Right cardiac atrium (tissue), 5 donors: ENCODE measurements at regions of chr2 and their contacts with region 1.

Region 1: GRCh38 chr2:231297108-231297908 is 98.2 kb upstream of the B3GNT7 start:
- DNase-seq: peak; percentile 56 to 85 (median 82)
- ATAC-seq: peak; percentile 74 to 81
- H3K4me3 ChIP-seq: no peak overlapping the region
- H3K27ac ChIP-seq: no peak overlapping the region
- H3K4me1 ChIP-seq: peaks cover 4% of the 10 kb centered on the region
- H3K27me3 ChIP-seq: no peaks in the 10 kb centered on the region

Region 2: GRCh38 chr2:231198291-231199173 is 98.8 kb before region 1 on chr2 and contains the start of gene ARMC9:
- intact Hi-C with region 1: no loop called
- DNase-seq: peak; percentile 76 to 90 (median 89)
- ATAC-seq: peak; percentile 97 to 98
- H3K4me3 ChIP-seq: peak within 1 kb of the TSS; percentile 82
- H3K27ac ChIP-seq: no peak within 1 kb of the TSS
- H3K4me1 ChIP-seq: peaks cover 2% of the 10 kb centered on the region
- H3K27me3 ChIP-seq: no peaks in the 10 kb centered on the region
- total RNA-seq, gene ARMC9: 3.5 to 6.8 (median 3.8) TPM

Region 3: DNA sequence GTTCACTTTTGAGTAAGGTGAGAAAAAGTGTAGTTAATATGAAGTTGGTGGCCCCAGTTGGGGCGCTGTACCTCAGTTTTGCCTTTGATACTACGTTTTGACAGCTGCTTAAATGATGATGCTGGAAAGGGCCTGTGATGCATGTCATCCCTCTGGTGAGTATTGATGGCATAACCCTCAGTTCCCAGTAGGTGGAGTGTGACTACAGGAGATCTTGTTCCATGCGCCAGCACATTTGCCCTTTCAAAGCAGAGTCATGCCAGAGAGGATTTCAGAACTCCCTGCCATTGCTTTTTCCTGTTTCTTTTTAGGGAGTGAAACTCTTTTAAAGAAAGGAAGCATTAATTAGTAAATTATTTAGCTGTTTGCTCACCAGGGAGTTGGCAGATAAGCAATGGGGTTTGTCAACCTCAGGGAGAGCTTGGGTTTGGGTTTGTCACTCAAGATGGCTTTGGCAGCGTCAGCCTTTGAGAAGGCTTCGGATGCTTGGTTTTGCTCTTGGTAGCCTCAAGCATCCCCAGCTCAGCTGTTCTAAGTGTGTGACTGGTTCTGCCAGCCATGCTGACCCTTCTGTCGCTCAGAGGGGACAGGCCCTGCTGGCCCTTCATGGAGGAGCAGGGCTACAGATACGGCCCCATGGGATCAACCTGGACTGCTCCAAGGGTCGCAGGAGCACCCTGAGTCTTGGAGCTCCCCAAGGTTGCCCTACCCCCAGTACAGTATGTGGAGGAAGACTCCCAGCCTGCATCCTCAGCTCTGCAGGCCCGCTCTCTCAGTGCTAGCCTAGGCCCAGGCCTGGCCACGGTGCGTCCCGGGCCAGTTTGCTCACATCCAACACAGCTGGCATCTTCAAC is 69.8 kb before region 1 on chr2:
- intact Hi-C with region 1: loop called in 1 of 4 experiments (anchors 10 kb)
- DNase-seq: peak in 2 of 3 donors; percentile 47 to 70
- ATAC-seq: peak; percentile 95 to 96
- H3K4me3 ChIP-seq: no peak overlapping the region
- H3K27ac ChIP-seq: no peak overlapping the region
- H3K4me1 ChIP-seq: no peaks in the 10 kb centered on the region
- H3K27me3 ChIP-seq: no peaks in the 10 kb centered on the region

Region 4: GRCh38 chr2:231245253-231246094 is 51.8 kb before region 1 on chr2:
- intact Hi-C with region 1: no loop called
- DNase-seq: peak in 1 of 3 donors; percentile 30
- ATAC-seq: no peak
- H3K4me3 ChIP-seq: no peak overlapping the region
- H3K27ac ChIP-seq: no peak overlapping the region
- H3K4me1 ChIP-seq: no peaks in the 10 kb centered on the region
- H3K27me3 ChIP-seq: no peaks in the 10 kb centered on the region

Region 5: GRCh38 chr2:231394211-231395141 is 97.2 kb after region 1 on chr2:
- intact Hi-C with region 1: loop called in 3 of 4 experiments (anchors 2 to 10 kb)
- DNase-seq: peak in 1 of 3 donors; percentile 6
- ATAC-seq: no peak
- H3K4me3 ChIP-seq: no peak overlapping the region
- H3K27ac ChIP-seq: no peak overlapping the region
- H3K4me1 ChIP-seq: no peaks in the 10 kb centered on the region
- H3K27me3 ChIP-seq: no peaks in the 10 kb centered on the region

Region 6: DNA sequence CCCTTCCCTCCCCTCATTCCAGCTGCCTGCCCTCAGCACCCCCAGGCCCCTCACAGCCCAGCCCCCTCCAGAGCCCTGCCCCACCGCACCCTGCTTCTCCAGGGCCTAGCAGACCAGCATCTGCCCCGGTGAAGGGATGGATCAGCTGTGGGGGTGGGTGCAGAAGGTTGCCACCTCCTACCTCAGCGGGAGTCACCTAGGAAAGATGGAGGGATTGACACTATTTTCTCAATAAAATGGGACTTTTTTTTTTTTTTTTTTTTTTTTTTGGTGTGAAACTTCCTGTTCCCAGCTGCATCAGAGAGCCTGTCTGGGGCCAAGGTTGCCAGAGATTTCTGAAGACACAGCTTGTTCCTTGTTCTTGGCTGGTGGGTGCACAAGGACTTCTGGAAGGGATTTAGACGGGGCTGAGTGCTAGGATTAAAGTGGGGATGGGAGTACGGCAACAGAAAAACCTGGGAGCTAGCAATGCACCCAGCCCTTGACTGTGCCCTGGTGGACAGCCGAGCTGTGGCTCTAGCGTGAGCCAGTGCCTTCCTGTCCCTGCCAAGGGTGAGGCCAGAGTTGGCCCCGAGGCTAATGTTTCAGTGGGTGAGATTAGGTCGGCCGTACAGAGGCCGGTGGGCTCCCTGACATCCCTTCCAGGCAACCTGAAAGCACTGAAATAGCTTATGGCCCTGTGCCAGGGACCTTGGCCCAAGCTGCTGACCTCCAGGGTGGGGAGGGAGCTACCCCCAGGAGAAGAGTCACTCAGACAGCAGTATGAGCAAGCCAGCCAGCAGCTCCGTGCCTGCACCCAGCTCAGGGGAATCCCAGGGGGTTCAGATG is 102.8 kb after region 1 on chr2:
- intact Hi-C with region 1: loop called (anchors 2 to 10 kb)
- DNase-seq: peak; percentile 61 to 83 (median 79)
- ATAC-seq: peak; percentile 75 to 77
- H3K4me3 ChIP-seq: no peak overlapping the region
- H3K27ac ChIP-seq: peak overlapping the region; percentile 25
- H3K4me1 ChIP-seq: peaks cover 5% of the 10 kb centered on the region
- H3K27me3 ChIP-seq: no peaks in the 10 kb centered on the region

Region 7: DNA sequence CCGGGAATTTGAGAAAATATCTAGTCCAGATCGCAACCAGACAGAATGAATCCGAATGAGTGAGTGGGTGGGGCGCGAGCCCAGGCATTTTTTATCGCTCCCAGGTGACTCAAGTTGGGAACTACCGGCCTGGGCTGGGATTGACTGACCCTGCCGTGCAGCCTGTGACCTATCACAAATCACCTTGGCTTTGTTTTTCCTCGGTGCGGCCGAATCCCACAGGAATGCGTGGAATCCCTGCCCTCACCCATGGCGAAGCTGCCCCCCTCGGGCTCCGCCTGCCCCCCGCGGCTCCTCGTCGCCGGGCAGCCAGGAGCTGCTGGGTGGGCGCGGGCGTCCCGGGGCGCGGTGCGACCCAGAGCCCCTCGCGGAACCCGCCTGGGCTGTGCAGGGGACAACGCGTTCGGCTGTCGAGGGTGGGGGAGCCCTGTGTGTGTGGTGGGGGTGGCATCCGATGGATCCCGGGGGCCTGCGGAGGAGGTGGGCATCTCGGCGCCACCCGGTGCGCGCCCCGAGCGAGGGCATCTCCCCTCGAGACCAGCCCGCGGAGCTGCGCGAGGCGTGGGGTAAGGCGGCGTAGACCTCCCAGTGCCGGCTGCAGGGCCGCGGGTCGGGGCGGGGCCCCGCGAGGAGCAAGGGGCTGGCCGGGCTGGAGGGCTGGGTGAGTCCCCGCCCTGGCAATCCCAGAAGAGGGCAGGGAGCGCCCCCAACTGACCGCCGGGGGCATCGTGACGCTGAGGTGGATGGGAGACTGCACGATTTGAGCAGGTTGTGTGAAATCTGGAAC is 114.7 kb after region 1 on chr2:
- intact Hi-C with region 1: loop called in 1 of 4 experiments (anchors 5 kb)
- DNase-seq: peak; percentile 88 to 94 (median 94)
- ATAC-seq: peak; percentile 99
- H3K4me3 ChIP-seq: peak overlapping the region; percentile 51
- H3K27ac ChIP-seq: no peak overlapping the region
- H3K4me1 ChIP-seq: no peaks in the 10 kb centered on the region
- H3K27me3 ChIP-seq: no peaks in the 10 kb centered on the region